A549 (cell line): ENCODE measurements at regions of chr3 and their contacts with region 1.

Region 1: DNA sequence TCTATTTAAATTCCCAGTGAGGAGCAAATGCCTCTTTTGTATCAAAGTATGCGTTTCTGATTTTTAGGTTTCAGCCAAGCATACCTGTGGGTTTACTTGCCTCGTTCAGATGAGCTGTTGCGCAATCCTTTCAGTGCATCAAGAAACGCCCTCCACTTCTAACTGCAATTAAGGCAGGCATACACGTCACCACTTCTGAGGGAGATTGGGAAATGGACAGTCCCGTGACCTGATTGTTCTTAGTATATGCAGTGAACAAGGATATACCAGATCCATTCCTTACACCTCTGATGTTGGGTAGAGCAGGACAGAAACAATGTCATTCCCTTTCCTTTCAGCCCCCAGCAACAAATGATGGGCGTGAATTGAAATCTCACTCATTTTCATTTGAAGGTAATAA is 219.0 kb downstream of the ITPR1 start:
- DNase-seq: no peak
- ATAC-seq: no peak
- H3K4me3 ChIP-seq: no peak overlapping the region
- H3K27ac ChIP-seq: peak overlapping the region; percentile 12 to 43; a peak in 4 of 6 replicates
- H3K4me1 ChIP-seq: peaks cover 20% of the 10 kb centered on the region
- CTCF ChIP-seq: no peak
- EP300 ChIP-seq: no peak
- POLR2A ChIP-seq: no peak
- RAD21 ChIP-seq: no peak

Region 2: DNA sequence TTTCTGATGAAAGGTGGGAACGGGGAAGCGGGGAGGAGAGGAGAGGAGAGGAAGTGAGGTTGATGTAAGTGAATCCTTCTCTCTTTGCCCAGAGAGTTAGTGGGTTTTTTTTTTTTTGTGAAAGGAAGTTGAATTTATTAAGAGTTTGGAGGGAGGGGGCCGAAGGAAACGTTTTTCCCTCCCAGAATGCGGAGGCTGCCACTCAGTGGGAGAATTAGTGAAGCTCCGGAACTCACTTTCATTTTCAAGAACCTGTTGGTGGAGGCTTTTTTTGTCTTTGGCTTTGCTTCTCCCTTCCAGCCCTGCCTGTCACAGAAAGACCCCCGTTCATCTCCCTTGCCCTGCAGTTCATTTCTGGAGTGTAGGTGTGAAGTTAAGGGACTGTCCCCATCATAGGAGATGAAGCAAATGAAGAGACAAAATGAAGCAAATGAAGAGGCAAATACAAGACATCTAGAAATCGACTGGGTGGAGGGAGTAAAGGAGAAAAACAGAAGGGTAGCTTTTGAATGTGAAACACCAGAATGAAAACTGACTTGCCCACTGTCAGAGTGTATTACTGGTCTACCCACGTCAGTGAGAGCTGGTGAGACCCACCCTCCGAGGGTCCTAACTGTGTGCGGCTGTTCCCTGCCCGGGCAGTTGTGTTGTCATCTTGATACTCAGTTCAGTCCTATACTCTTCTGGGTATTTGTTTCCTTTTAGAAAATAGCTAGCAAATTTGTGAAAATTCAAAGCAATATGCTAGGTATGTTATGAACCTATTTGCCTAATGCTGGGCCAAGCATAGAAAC is 127.5 kb before region 1 on chr3:
- CTCF ChIA-PET with region 1: no interaction called
- POLR2A ChIA-PET with region 1: no interaction called
- DNase-seq: no peak
- ATAC-seq: no peak
- H3K4me3 ChIP-seq: no peak overlapping the region
- H3K27ac ChIP-seq: no peak overlapping the region
- H3K4me1 ChIP-seq: no peaks in the 10 kb centered on the region
- CTCF ChIP-seq: no peak
- EP300 ChIP-seq: no peak
- POLR2A ChIP-seq: no peak
- RAD21 ChIP-seq: no peak

Region 3: DNA sequence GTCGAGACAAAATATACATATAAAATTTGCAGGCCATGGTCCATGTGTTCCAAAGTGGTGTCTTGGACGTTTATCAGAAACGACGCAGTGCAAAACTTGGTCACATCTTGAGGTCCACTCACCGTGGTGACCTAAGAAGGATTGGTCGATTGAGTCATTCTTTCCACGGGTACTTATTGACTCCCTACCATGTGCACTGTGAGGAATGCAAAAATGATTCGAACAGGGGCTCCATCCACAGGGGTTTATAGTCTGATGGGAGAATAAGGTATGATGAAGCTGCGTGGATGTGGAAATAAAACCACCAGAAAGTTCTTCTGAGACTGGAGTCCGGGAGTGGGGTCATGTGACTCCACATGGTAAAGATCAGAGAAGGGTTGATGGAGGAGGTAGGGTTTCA is 33.8 kb before region 1 on chr3:
- CTCF ChIA-PET with region 1: interaction called, 11 read pairs
- POLR2A ChIA-PET with region 1: no interaction called
- DNase-seq: no peak
- ATAC-seq: no peak
- H3K4me3 ChIP-seq: no peak overlapping the region
- H3K27ac ChIP-seq: no peak overlapping the region
- H3K4me1 ChIP-seq: no peaks in the 10 kb centered on the region
- CTCF ChIP-seq: no peak
- EP300 ChIP-seq: no peak
- POLR2A ChIP-seq: no peak
- RAD21 ChIP-seq: no peak

Region 4: GRCh38 chr3:4695847-4696665 is 16.1 kb before region 1 on chr3:
- CTCF ChIA-PET with region 1: interaction called, 33 read pairs
- POLR2A ChIA-PET with region 1: no interaction called
- DNase-seq: no peak
- ATAC-seq: peak in 1 of 2 experiments; percentile 24; a peak in 1 of 6 replicates
- H3K4me3 ChIP-seq: no peak overlapping the region
- H3K27ac ChIP-seq: no peak overlapping the region
- H3K4me1 ChIP-seq: peaks cover 9% of the 10 kb centered on the region; the same call in 2 of the 3 replicates
- CTCF ChIP-seq: no peak
- EP300 ChIP-seq: no peak
- POLR2A ChIP-seq: no peak
- RAD21 ChIP-seq: no peak

Region 5: GRCh38 chr3:4741404-4742307 is 29.5 kb after region 1 on chr3:
- CTCF ChIA-PET with region 1: interaction called, 26 read pairs
- POLR2A ChIA-PET with region 1: no interaction called
- DNase-seq: peak; percentile 92 to 97
- ATAC-seq: peak; percentile 77 to 84
- H3K4me3 ChIP-seq: no peak overlapping the region
- H3K27ac ChIP-seq: peak overlapping the region; percentile 61 to 84
- H3K4me1 ChIP-seq: peaks cover 63% of the 10 kb centered on the region
- CTCF ChIP-seq: no peak
- EP300 ChIP-seq: peak; percentile 49 to 69; a peak in 2 of 5 replicates
- POLR2A ChIP-seq: no peak
- RAD21 ChIP-seq: peak; percentile 29 to 48

Region 6: DNA sequence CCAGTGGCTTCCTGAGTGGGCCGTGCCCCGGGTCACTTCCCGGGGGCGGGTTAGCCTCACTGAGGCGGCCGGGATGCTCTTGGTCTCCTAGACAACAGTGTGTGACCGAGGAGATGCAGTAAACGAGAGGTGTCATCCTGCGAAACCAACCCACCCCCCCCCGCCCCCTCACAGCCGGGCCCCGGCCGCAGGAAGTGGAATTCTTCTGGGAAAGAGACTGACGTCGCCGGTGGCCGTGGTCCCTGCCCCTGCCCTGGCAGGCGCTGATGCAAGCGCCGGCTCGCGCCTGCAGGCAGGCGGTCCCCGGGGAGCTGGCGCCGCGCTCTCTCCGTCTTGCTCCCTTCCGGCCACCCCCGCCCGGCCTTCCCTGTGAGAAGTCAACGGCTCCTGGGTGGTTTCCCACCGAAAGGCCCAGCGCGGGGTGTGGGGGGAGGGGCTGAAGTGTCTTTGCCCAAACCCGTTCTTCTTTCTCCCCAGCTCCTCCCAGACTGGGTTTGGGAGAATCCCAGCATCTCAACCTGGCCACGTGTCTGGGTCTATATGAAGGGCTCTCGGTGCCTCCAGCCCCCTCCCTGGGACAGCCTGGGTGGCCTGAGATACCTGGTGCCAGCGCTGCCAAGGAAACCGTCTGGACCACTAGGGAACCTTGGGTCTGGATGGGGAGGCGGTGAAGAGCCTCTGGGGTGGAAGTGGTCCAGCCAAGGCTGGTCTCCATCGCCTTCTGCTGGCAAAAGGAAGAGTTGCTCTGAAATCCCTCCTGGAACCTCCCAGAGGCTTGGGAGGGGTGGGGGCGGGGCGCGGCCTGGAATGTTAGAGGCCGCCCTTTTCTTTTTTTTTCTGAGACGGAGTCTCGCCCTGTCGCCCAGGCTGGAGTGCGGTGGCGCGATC is 314.4 kb after region 1 on chr3:
- CTCF ChIA-PET with region 1: interaction called, 38 read pairs
- POLR2A ChIA-PET with region 1: interaction called, 5 read pairs
- DNase-seq: peak; percentile 79 to 98
- ATAC-seq: peak; percentile 85 to 87
- H3K4me3 ChIP-seq: peak overlapping the region; percentile 27
- H3K27ac ChIP-seq: peak overlapping the region; percentile 94 to 98
- H3K4me1 ChIP-seq: peaks cover 49% of the 10 kb centered on the region
- CTCF ChIP-seq: peak; percentile 70
- EP300 ChIP-seq: peak; percentile 96 to 99; a peak in 4 of 5 replicates
- POLR2A ChIP-seq: no peak
- RAD21 ChIP-seq: peak; percentile 93 to 95

Region 7: DNA sequence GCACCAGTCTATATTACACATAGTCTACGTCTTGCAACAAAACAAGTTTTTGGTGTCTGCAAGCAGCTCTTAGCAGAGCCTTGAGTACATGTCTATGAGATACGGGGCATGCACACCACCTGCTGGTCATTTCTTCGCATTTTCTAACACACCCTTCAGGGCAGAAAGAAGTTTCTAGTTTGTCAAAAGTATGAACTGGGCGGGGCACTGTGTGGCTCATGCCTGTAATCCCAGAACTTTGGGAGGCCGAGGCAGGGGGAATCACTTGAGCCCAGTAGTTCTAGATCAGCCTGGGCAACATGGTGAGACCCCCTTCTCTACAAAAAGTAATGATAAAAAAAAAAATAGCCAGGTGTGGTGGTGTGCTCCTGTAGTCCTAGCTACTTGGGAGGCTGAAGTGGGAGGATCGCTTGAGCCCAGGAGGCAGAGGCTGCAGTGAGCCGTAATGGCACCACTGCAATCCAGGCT is 345.7 kb after region 1 on chr3:
- CTCF ChIA-PET with region 1: interaction called, 128 read pairs
- POLR2A ChIA-PET with region 1: interaction called, 3 read pairs
- DNase-seq: peak; percentile 62 to 91
- ATAC-seq: peak; percentile 96
- H3K4me3 ChIP-seq: no peak overlapping the region
- H3K27ac ChIP-seq: peak overlapping the region; percentile 9 to 73; a peak in 4 of 6 replicates
- H3K4me1 ChIP-seq: peaks cover 16% of the 10 kb centered on the region; the same call in 2 of the 3 replicates
- CTCF ChIP-seq: peak; percentile 92
- EP300 ChIP-seq: no peak
- POLR2A ChIP-seq: no peak
- RAD21 ChIP-seq: peak; percentile 95 to 97

Region 8: DNA sequence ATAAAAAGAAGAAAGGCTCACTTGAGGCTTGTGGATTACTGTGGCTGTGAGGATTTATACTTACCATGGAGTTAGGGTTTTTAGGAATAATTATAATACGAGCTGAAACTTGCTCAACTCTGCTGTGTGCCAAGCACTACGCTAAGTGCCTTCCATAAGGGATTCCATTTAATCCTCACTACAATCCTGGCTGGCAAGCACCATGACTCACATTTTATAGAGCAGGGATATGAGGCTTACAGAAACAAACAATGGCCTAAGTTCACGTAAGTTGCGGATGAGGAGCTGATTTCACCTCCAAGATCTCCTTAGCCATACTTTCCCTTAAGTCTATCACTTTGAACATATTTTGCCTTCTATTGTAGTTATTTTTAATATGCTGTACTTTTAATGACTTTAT is 366.0 kb after region 1 on chr3:
- CTCF ChIA-PET with region 1: interaction called, 18 read pairs
- POLR2A ChIA-PET with region 1: no interaction called
- DNase-seq: peak; percentile 29 to 52
- ATAC-seq: peak in 1 of 2 experiments; percentile 77; a peak in 4 of 6 replicates
- H3K4me3 ChIP-seq: no peak overlapping the region
- H3K27ac ChIP-seq: no peak overlapping the region
- H3K4me1 ChIP-seq: peaks cover 3% of the 10 kb centered on the region; the same call in 1 of the 3 replicates
- CTCF ChIP-seq: no peak
- EP300 ChIP-seq: no peak
- POLR2A ChIP-seq: no peak
- RAD21 ChIP-seq: no peak